A549 (cell line): ENCODE measurements at regions of chr3 and their contacts with region 1.

Region 1: GRCh38 chr3:128617557-128618397 is 32.8 kb downstream of the RPN1 start:
- DNase-seq: peak; percentile 90 to 94
- ATAC-seq: peak; percentile 80 to 92
- H3K4me3 ChIP-seq: peak overlapping the region; percentile 57
- H3K27ac ChIP-seq: peak overlapping the region; percentile 77 to 93
- H3K4me1 ChIP-seq: peaks cover 15% of the 10 kb centered on the region
- CTCF ChIP-seq: peak; percentile 72
- EP300 ChIP-seq: no peak
- POLR2A ChIP-seq: no peak
- RAD21 ChIP-seq: peak; percentile 52 to 55

Region 2: GRCh38 chr3:128629936-128630335 is 12.2 kb after region 1 on chr3:
- CTCF ChIA-PET with region 1: interaction called, 15 read pairs
- POLR2A ChIA-PET with region 1: no interaction called
- DNase-seq: no peak
- ATAC-seq: no peak
- H3K4me3 ChIP-seq: no peak overlapping the region
- H3K27ac ChIP-seq: no peak overlapping the region
- H3K4me1 ChIP-seq: no peaks in the 10 kb centered on the region
- CTCF ChIP-seq: no peak
- EP300 ChIP-seq: no peak
- POLR2A ChIP-seq: no peak
- RAD21 ChIP-seq: no peak

Region 3: DNA sequence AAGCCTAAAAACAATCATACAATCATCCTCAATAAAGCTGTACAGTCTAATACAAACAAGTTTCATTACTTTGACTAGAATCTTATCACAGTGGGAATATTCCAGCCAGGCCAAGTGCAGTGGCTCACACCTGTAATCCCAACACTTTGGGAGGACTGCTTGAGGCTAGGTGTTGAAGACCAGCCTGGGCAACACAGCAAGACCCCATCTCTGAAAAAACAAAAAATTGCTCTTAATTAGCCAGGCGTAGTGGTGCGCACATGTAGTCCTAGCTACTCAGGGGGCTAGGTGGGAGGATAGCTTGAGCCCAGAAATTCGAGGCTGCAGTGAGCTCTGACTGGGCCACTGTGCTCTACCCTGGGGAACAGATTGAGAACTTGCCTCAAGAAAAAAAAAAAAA is 29.5 kb after region 1 on chr3:
- CTCF ChIA-PET with region 1: interaction called, 13 read pairs
- POLR2A ChIA-PET with region 1: interaction called, 4 read pairs
- DNase-seq: no peak
- ATAC-seq: no peak
- H3K4me3 ChIP-seq: no peak overlapping the region
- H3K27ac ChIP-seq: no peak overlapping the region
- H3K4me1 ChIP-seq: peaks cover 4% of the 10 kb centered on the region; the same call in 2 of the 3 replicates
- CTCF ChIP-seq: no peak
- EP300 ChIP-seq: no peak
- POLR2A ChIP-seq: no peak
- RAD21 ChIP-seq: no peak

Region 4: DNA sequence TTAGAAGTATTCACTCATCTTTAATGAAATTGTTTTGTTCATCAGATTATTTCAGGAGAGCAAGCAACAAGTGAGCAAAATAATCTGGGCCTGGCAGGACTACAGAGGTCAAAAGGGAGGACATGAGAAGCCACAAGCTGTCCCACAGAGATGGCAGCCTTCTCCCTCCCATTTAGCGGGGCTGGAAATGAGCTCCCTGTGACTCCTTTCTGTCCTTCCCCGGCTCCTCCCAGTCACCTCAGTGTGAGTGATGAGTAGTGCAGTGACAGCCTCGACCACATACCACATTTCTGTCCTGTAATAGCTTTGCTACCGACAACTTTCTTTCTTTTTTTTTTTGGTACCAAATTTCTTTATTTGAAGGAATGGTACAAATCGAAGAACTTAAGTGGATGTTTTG is 146.2 kb after region 1 on chr3:
- CTCF ChIA-PET with region 1: no interaction called
- POLR2A ChIA-PET with region 1: no interaction called
- DNase-seq: no peak
- ATAC-seq: no peak
- H3K4me3 ChIP-seq: no peak overlapping the region
- H3K27ac ChIP-seq: no peak overlapping the region
- H3K4me1 ChIP-seq: no peaks in the 10 kb centered on the region
- CTCF ChIP-seq: no peak
- EP300 ChIP-seq: no peak
- POLR2A ChIP-seq: no peak
- RAD21 ChIP-seq: no peak